Panc1 (cell line): ENCODE measurements at regions of chr15 and their contacts with region 1.

Region 1: DNA sequence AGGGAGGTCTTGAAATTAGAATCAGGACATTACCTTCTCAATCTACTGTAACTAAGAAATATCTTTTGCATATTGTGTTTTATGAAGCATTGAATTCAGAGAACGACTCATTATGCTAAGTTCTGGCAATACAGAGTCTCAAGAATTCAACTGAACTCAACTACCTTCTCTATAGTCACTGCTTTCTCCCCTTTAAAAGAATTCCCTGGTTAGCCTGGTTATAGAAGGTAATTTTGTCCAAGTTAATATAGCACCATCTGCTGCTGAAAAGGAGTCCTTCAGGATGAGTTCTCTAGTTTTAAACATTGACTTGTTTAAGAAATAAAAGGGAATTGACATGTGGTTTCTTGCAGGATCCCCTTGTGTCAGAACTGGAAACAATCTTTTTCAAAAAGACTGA is 60.2 kb downstream of the IL16 start:
- DNase-seq: no peak
- ATAC-seq: peak; percentile 73; the same call in 1 of the 2 replicates
- H3K4me3 ChIP-seq: no peak overlapping the region
- H3K27ac ChIP-seq: no peak overlapping the region
- H3K4me1 ChIP-seq: no peaks in the 10 kb centered on the region
- H3K27me3 ChIP-seq: peaks cover 17% of the 10 kb centered on the region
- CTCF ChIP-seq: peak; percentile 50; the same call in 1 of the 2 replicates

Region 2: GRCh38 chr15:81106560-81106959 is 150.4 kb before region 1 on chr15:
- CTCF ChIA-PET with region 1: no interaction called
- POLR2A ChIA-PET with region 1: no interaction called
- in situ Hi-C with region 1: no loop called
- intact Hi-C with region 1: loop called (anchors 2 kb)
- DNase-seq: peak; percentile 60
- ATAC-seq: peak; percentile 80
- H3K4me3 ChIP-seq: no peak overlapping the region
- H3K27ac ChIP-seq: no peak overlapping the region
- H3K4me1 ChIP-seq: no peaks in the 10 kb centered on the region
- H3K27me3 ChIP-seq: peaks cover 6% of the 10 kb centered on the region; the same call in 1 of the 2 replicates
- CTCF ChIP-seq: peak; percentile 85

Region 3: GRCh38 chr15:81155375-81156218 is 101.3 kb before region 1 on chr15:
- CTCF ChIA-PET with region 1: interaction called, 4 read pairs
- POLR2A ChIA-PET with region 1: no interaction called
- in situ Hi-C with region 1: no loop called
- intact Hi-C with region 1: loop called (anchors 2 kb)
- DNase-seq: peak; percentile 25
- ATAC-seq: peak; percentile 73
- H3K4me3 ChIP-seq: no peak overlapping the region
- H3K27ac ChIP-seq: no peak overlapping the region
- H3K4me1 ChIP-seq: no peaks in the 10 kb centered on the region
- H3K27me3 ChIP-seq: no peaks in the 10 kb centered on the region
- CTCF ChIP-seq: peak; percentile 76